ENCODE measurements at regions of chr15 and their contacts with region 1.

Region 1: GRCh38 chr15:78241007-78241406 is 6.6 kb upstream of the ACSBG1 start:
- DNase-seq: peak; percentile 86 to 95
- ATAC-seq: peak; percentile 94 to 98 (median 96)
- H3K4me3 ChIP-seq: no peak overlapping the region
- H3K27ac ChIP-seq: no peak overlapping the region
- H3K4me1 ChIP-seq: peaks cover 5% of the 10 kb centered on the region
- H3K27me3 ChIP-seq: no peaks in the 10 kb centered on the region
- CTCF ChIP-seq: peak; percentile 91

Region 2: DNA sequence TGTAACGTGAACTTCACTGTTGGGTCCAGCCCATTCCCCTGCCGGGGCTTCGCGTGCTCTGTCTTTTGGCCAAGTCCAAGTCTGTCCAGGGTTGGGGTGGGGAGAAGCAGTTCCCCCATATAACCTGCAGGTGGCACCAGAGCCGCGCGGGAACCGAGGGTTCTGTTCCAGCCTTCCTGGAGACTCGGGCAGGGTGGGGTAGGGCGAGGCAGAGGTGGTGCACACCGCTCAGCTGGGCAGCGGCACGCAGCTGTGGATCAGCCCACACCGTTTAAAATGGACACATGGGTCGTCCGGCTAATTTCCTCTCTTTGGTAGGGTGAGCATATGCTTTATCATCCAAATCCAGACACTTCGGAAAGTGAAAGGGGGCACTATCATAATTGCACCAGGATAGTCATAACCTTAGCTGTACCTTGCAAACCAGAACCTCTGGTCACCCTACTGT is 281.6 kb before region 1 on chr15:
- intact Hi-C with region 1: loop called (anchors 5 to 10 kb)
- DNase-seq: peak; percentile 77 to 89
- ATAC-seq: peak; percentile 99
- H3K4me3 ChIP-seq: peak overlapping the region; percentile 44
- H3K27ac ChIP-seq: no peak overlapping the region
- H3K4me1 ChIP-seq: no peaks in the 10 kb centered on the region
- H3K27me3 ChIP-seq: no peaks in the 10 kb centered on the region
- CTCF ChIP-seq: peak; percentile 94

Region 3: GRCh38 chr15:77966540-77967290 is 274.3 kb before region 1 on chr15:
- intact Hi-C with region 1: loop called in 1 of 2 experiments (anchors 10 kb)
- DNase-seq: peak in 1 of 2 donors; percentile 73
- ATAC-seq: peak; percentile 75 to 94 (median 84)
- H3K4me3 ChIP-seq: no peak overlapping the region
- H3K27ac ChIP-seq: no peak overlapping the region
- H3K4me1 ChIP-seq: no peaks in the 10 kb centered on the region
- H3K27me3 ChIP-seq: no peaks in the 10 kb centered on the region
- CTCF ChIP-seq: peak; percentile 87

Region 4: DNA sequence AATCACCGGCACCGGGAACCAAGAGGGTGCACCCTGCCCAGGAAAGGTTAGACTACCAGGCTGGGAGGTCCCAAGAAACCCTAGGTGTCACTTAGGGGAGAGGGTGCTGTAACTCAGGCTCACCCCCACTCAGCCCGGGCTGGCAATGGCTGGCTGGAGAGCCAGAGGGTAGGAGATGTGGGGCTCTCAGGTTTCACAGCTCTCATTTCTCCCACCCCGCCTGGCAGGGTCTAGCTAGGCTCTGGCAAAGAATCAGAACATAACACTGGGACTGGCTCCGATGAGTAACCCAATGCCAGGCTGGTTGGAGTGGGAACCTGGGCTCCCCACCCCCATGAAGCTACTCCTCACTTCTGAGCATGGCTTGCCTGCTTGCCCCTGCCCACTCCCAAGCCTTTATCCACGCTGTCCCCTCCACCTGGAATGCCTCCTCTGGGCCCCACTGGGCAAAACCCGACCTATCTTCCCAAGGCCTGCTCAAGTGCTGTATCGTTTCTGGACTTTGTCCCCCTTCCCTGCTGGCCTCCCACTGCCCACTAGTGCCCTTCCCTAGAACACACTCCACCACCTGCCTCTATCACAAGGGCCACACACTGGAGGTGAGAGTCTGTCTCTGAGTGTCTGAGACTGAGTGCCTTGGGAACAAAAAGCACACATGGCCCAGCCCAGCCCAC is 111.8 kb before region 1 on chr15:
- intact Hi-C with region 1: loop called in 1 of 2 experiments (anchors 5 kb)
- DNase-seq: peak; percentile 37 to 72
- ATAC-seq: peak; percentile 65 to 78 (median 68)
- H3K4me3 ChIP-seq: peak overlapping the region; percentile 4
- H3K27ac ChIP-seq: peak overlapping the region; percentile 46
- H3K4me1 ChIP-seq: peaks cover 19% of the 10 kb centered on the region
- H3K27me3 ChIP-seq: no peaks in the 10 kb centered on the region
- CTCF ChIP-seq: no peak

Region 5: GRCh38 chr15:78177447-78177873 is 63.5 kb before region 1 on chr15:
- intact Hi-C with region 1: loop called (anchors 1 to 5 kb)
- DNase-seq: peak in 1 of 2 donors; percentile 68
- ATAC-seq: peak; percentile 55 to 83 (median 64)
- H3K4me3 ChIP-seq: no peak overlapping the region
- H3K27ac ChIP-seq: no peak overlapping the region
- H3K4me1 ChIP-seq: no peaks in the 10 kb centered on the region
- H3K27me3 ChIP-seq: no peaks in the 10 kb centered on the region
- CTCF ChIP-seq: peak; percentile 64

Region 6: DNA sequence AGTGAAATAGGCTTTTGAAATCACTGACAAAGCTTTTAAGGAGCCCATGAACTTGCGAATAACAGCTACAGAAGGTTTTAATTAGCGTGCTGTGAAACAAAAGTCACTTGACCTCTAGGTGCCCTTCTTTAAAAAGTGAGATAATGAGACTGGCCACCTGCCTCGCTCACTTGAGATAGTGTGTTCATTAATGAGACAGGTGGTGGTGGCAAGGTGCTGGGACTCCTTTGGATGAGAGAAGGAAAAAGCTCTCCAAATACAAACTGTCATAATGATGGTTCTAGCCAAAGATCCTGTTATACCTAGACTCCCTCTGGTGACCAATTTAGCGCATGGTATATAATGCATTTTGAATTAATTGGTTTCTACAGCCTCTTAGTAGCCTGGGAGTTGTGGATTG is 174.3 kb after region 1 on chr15:
- intact Hi-C with region 1: no loop called
- DNase-seq: no peak
- ATAC-seq: no peak
- H3K4me3 ChIP-seq: no peak overlapping the region
- H3K27ac ChIP-seq: no peak overlapping the region
- H3K4me1 ChIP-seq: no peaks in the 10 kb centered on the region
- H3K27me3 ChIP-seq: no peaks in the 10 kb centered on the region
- CTCF ChIP-seq: peak; percentile 17

Measured in psoas muscle (tissue), 8 donors.